ENCODE measurements at regions of chr5 and their contacts with region 1.

Region 1: DNA sequence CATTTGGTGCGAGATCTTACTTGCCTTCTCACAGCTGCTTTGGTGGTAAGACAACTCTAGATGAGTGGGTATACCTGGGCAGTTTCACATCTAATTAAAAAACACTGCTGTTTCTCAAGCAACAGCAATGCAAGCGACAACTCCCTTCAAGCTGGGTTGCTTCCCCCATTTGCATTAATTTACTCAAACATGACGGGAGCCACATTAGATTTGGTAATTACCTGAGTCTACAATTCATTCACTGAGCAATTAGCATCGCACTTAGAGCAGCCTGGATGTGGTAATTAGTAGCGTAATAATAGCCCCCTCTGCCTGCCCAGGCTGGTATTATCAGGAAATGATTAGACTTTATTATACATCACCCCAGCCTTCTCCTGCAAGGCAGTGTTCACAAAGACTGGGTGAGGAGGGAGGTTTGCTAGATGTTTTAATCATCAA is 73.4 kb downstream of the FBXO38 start:
- DNase-seq: no peak
- H3K4me3 ChIP-seq: no peak overlapping the region
- H3K27ac ChIP-seq: no peak overlapping the region
- H3K4me1 ChIP-seq: peaks cover 0 to 10% (median 8%) of the 10 kb centered on the region in 4 experiments; a peak in 4 of 7 replicates
- H3K27me3 ChIP-seq: no peaks in the 10 kb centered on the region
- CTCF ChIP-seq: peak in 2 of 3 experiments; percentile 39 to 52; a peak in 3 of 4 replicates
- EP300 ChIP-seq: no peak
- POLR2A ChIP-seq: no peak
- RAD21 ChIP-seq: peak; percentile 32 to 42; a peak in 3 of 4 replicates

Region 2: GRCh38 chr5:148336704-148337435 is 120.3 kb before region 1 on chr5:
- CTCF ChIA-PET with region 1: no interaction called
- POLR2A ChIA-PET with region 1: no interaction called
- DNase-seq: no peak
- H3K4me3 ChIP-seq: no peak overlapping the region
- H3K27ac ChIP-seq: no peak overlapping the region
- H3K4me1 ChIP-seq: no peaks in the 10 kb centered on the region
- H3K27me3 ChIP-seq: no peaks in the 10 kb centered on the region
- CTCF ChIP-seq: no peak
- EP300 ChIP-seq: no peak
- POLR2A ChIP-seq: no peak
- RAD21 ChIP-seq: no peak

Region 3: DNA sequence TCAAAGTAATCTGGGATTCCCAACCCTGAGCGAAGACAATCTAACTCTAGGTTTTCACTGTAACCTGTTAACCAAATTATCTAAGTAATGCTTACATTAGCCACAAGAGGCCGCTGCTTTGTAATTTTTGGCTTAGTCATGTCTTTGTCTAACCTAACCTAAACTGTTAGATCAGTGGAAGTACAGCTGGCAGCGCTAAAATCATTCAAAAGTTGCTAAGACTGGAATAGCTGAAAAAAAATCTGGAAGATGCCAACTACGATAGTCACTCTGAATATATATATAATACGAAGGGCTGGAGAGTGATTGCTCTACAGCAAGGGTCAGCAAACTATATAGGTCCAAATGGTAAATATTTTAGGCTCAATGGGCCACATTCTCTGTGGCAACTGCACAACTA is 13.2 kb before region 1 on chr5:
- CTCF ChIA-PET with region 1: interaction called, 38 read pairs
- POLR2A ChIA-PET with region 1: interaction called, 3 read pairs
- DNase-seq: no peak
- H3K4me3 ChIP-seq: no peak overlapping the region
- H3K27ac ChIP-seq: no peak overlapping the region
- H3K4me1 ChIP-seq: no peaks in the 10 kb centered on the region; a peak in 1 of 7 replicates
- H3K27me3 ChIP-seq: no peaks in the 10 kb centered on the region
- CTCF ChIP-seq: peak in 2 of 3 experiments; percentile 71 to 80; a peak in 3 of 4 replicates
- EP300 ChIP-seq: no peak
- POLR2A ChIP-seq: no peak
- RAD21 ChIP-seq: peak; percentile 82 to 86

Region 4: GRCh38 chr5:148641735-148642134 is 184.5 kb after region 1 on chr5:
- CTCF ChIA-PET with region 1: no interaction called
- POLR2A ChIA-PET with region 1: no interaction called
- DNase-seq: no peak
- H3K4me3 ChIP-seq: no peak overlapping the region
- H3K27ac ChIP-seq: no peak overlapping the region
- H3K4me1 ChIP-seq: no peaks in the 10 kb centered on the region
- H3K27me3 ChIP-seq: no peaks in the 10 kb centered on the region
- CTCF ChIP-seq: no peak
- EP300 ChIP-seq: no peak
- POLR2A ChIP-seq: no peak
- RAD21 ChIP-seq: no peak

Measured in H1 (cell line).